BJ (cell line): ENCODE measurements at regions of chr3 and their contacts with region 1.

Region 1: DNA sequence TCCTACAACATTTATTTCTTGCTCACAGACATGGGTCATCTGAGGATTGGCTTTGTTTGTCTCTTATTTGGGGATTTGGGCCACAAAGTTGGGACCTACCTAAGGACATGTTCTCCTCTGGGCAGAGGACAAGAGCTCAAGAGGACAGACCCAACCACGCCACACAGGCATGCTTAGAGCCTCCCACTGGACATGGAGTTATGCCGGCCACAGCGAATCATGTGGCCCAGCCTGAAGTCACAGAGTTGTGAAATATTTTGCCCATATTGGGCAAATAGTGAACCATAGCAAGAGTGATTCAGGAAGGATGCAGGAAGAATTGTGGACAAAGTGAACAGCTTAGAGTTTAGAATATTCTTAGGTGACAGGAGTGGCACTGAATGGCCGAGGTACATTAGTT is 9.9 kb downstream of the TRAK1 start:
- DNase-seq: no peak
- H3K4me3 ChIP-seq: no peak overlapping the region
- H3K27me3 ChIP-seq: no peaks in the 10 kb centered on the region
- CTCF ChIP-seq: no peak

Region 2: DNA sequence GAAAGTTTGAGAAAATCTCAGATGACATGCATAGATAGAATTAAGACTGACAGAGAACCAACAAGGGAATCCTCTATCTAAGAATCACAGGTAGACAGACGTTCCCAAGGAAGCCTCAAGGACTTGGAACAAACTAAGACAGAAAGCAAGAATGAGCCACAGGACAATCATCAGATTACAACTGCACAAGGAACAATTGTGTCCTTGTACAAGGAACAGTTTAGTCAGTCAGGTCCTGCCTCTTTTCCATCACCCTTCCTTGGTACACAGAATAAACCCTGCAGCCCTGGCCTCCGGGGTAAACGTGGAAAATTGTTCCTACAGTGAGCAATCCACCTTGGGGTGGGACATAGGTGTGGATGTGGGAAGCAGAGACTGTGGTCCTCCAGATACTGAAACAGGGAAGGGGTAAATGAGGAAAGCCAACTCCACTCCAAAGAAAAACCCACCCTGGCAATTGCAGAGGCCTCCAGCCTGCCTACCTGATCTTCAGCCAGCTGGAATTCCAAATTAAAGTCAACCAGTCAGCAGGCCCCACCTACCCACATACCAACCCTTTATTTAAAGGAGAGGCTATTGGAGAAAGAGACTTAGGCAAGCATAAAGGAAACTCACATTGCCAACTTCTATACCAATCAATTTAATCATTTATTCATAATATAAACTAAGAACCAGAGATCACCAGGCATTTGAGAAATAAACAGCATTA is 212.5 kb before region 1 on chr3:
- CTCF ChIA-PET with region 1: interaction called, 11 read pairs
- POLR2A ChIA-PET with region 1: no interaction called
- DNase-seq: no peak
- H3K4me3 ChIP-seq: no peak overlapping the region
- H3K27me3 ChIP-seq: no peaks in the 10 kb centered on the region
- CTCF ChIP-seq: no peak

Region 3: GRCh38 chr3:41997702-41998550 is 103.1 kb before region 1 on chr3:
- CTCF ChIA-PET with region 1: interaction called, 26 read pairs
- POLR2A ChIA-PET with region 1: no interaction called
- DNase-seq: no peak
- H3K4me3 ChIP-seq: no peak overlapping the region
- H3K27me3 ChIP-seq: no peaks in the 10 kb centered on the region
- CTCF ChIP-seq: peak; percentile 57

Region 4: DNA sequence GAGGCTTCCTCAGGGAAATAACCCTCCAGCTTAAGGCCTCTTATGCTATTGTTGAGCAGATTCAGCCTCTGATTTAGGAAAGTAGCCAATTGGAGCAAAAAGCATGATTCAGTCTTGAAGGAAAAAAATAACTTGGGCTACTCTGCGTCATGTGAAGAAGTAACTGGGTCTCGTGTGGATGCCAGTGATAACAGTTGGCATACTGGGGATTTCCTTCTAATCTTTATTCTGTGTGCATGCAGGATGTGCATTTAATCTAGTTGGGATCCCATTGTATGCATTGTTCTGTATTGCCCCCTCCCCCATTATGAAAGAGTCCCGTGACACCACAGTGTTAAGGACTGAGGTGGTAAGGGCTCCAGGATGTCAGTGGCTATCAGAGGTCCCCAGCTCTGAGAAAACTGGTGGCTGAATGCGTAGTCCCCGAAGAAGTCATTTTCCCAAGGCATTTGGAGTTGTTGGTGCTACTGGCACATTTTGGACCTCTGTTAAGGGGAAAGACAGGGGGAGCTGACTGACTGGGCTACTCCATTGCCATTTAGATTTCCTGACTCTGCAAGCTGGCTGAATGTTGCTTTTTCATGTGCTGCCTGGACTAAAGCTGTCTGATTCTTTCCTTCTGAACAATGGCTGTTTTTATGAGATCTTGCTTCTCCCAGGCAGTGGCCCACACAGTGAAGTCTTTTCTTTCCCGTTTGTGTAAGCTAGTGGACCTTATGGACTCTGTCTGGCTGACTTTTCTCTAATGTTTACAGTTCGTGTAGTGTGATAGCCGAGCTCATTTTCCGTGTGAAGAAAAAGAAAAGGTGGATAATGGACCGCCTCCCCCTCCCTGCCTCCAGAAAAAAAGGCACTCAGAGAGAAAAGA is 48.3 kb before region 1 on chr3:
- CTCF ChIA-PET with region 1: interaction called, 17 read pairs
- POLR2A ChIA-PET with region 1: no interaction called
- DNase-seq: no peak
- H3K4me3 ChIP-seq: no peak overlapping the region
- H3K27me3 ChIP-seq: no peaks in the 10 kb centered on the region
- CTCF ChIP-seq: no peak

Region 5: GRCh38 chr3:42085641-42086376 is 15.2 kb before region 1 on chr3:
- CTCF ChIA-PET with region 1: interaction called, 15 read pairs
- POLR2A ChIA-PET with region 1: no interaction called
- DNase-seq: no peak
- H3K4me3 ChIP-seq: no peak overlapping the region
- H3K27me3 ChIP-seq: no peaks in the 10 kb centered on the region
- CTCF ChIP-seq: no peak

Region 6: DNA sequence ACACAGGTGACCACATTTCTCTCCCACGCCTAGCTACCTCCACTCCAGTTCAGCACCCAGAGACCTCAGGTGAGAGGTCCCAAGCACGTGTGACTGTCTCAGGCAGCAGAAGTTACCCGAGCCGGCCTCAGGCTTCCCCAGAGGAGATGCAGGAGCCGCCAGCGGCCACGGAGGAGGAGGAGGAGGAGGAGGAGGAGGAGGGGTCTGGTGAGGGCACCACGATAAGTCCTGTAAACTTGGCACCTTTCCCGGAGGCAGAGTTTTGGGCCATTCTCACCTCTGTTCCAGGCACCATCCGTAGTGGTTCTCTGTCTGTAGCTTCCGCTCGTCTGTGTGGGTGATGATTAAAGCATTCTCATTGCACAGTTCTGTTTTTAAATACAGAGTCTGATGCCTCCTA is 108.9 kb after region 1 on chr3:
- CTCF ChIA-PET with region 1: no interaction called
- POLR2A ChIA-PET with region 1: no interaction called
- DNase-seq: no peak
- H3K4me3 ChIP-seq: no peak overlapping the region
- H3K27me3 ChIP-seq: no peaks in the 10 kb centered on the region
- CTCF ChIP-seq: no peak

Region 7: GRCh38 chr3:42264399-42265058 is 163.5 kb after region 1 on chr3:
- CTCF ChIA-PET with region 1: no interaction called
- POLR2A ChIA-PET with region 1: no interaction called
- DNase-seq: no peak
- H3K4me3 ChIP-seq: no peak overlapping the region
- H3K27me3 ChIP-seq: peaks cover 28% of the 10 kb centered on the region
- CTCF ChIP-seq: no peak

Region 8: GRCh38 chr3:42562047-42562907 is 461.2 kb after region 1 on chr3:
- CTCF ChIA-PET with region 1: no interaction called
- POLR2A ChIA-PET with region 1: no interaction called
- DNase-seq: no peak
- H3K4me3 ChIP-seq: no peak overlapping the region
- H3K27me3 ChIP-seq: no peaks in the 10 kb centered on the region
- CTCF ChIP-seq: no peak